Heart left ventricle (tissue), 16 donors: ENCODE measurements at regions of chr16 and their contacts with region 1.

Region 1: GRCh38 chr16:14300705-14301168 is 229.6 kb downstream of the MRTFB start:
- DNase-seq: peak; percentile 66 to 83 (median 76)
- ATAC-seq: peak; percentile 76 to 86 (median 80)
- H3K4me3 ChIP-seq: peak overlapping the region in 11 of 12 donors; percentile 37 to 99 (median 85)
- H3K27ac ChIP-seq: peak overlapping the region in 10 of 12 donors; percentile 49 to 93 (median 82)
- H3K4me1 ChIP-seq: peaks cover 0 to 33% (median 11%) of the 10 kb centered on the region in 12 donors
- H3K27me3 ChIP-seq: peaks cover 0 to 24% (median 0%) of the 10 kb centered on the region in 9 donors
- CTCF ChIP-seq: peak in 11 of 12 donors; percentile 37 to 76 (median 58)
- POLR2A ChIP-seq: no peak

Region 2: DNA sequence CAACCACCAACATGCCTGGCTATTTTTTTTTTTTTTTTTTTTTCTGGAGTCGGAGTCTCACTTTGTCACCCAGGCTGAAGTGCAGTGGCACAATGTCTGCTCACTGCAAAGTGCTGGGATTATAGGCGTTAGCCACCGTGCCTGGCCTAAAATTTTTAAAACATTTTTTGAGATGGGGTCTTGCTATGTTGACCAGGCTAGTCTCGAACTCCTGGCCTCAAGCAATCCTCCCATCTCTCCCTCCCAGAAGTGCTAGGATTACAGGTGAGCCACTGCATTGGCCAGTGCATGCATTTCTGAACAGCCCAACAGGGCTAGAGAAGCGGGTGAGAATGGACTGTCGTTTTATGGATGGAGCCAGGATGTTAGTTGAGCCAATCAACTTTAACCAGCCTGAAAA is 308.4 kb before region 1 on chr16:
- intact Hi-C with region 1: no loop called
- DNase-seq: no peak
- ATAC-seq: no peak
- H3K4me3 ChIP-seq: no peak overlapping the region
- H3K27ac ChIP-seq: peak overlapping the region in 1 of 12 donors; percentile 34
- H3K4me1 ChIP-seq: peaks cover 0 to 18% (median 12%) of the 10 kb centered on the region in 12 donors
- H3K27me3 ChIP-seq: no peaks in the 10 kb centered on the region
- CTCF ChIP-seq: no peak
- POLR2A ChIP-seq: no peak

Region 3: DNA sequence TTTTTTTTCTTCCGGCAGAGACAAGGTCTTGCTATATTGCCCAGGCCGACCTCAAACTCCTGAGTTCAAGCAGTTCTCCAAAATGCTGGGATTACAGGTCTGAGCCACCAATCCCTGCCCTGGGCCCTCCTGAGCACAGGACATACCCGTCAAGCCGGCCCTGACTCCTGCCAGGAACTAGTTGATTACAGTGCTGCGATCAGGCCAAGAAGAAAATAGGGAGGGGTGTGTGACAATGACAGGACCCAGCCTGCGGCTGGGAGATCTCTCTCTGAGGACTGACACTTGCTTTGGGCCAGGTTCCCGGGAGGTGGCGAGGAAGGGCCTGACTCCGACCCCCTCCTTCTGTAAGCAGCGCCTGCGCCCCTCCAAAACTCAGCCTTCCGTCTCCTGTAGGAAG is 47.0 kb after region 1 on chr16:
- intact Hi-C with region 1: loop called in 2 of 10 experiments (anchors 5 to 10 kb)
- DNase-seq: peak; percentile 66 to 87 (median 73)
- ATAC-seq: peak; percentile 96 to 98 (median 96)
- H3K4me3 ChIP-seq: no peak overlapping the region
- H3K27ac ChIP-seq: peak overlapping the region; percentile 4 to 77 (median 62)
- H3K4me1 ChIP-seq: peaks cover 0 to 10% (median 0%) of the 10 kb centered on the region in 12 donors
- H3K27me3 ChIP-seq: no peaks in the 10 kb centered on the region
- CTCF ChIP-seq: no peak
- POLR2A ChIP-seq: no peak

Region 4: DNA sequence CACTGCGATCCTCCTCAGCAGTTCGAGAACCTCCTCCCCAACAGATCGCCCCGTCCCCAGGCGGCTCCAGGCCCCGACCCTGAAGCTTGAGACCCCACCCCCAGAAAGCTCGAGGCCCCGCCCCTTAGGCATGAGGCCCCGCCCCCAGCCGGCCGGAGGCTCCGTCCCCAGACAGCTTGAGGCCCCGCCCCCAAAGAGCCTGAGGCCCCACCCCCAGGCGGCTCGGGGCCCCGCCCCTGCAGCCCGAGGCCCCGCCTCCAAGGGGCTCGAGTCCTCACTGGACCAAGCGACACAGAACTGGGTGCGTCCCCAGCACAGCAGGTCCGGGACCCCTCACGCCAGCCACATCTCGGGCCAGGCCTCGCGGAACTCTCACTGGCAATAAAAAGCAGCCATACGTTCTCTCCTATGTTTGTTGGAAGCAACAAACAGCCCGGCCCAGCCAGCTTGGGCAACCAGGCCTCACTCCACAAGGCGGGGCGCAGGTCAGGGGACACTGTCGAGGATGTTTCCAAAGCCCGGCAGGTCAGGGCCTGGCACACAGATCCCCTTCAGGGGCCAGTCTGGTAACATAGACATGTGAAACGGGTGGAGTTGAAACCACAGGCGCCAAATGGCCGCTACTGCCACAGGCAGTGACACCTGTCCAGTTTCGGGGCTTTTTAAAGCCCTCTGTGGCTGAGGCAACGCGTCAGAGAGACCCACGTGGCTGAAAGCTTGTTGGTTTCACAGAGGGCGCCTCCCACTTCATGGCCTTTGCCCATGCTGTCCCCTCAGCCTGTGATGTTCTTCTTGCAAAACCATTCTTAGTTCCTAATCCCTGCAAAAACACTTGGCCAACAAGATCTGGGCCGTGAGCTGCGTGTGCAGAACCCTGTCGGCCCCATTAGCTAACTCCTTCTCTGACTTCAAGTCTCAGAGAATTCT is 105.1 kb after region 1 on chr16:
- intact Hi-C with region 1: loop called in 2 of 10 experiments (anchors 10 kb)
- DNase-seq: peak in 1 of 5 donors; percentile 3
- ATAC-seq: peak in 1 of 4 donors; percentile 17
- H3K4me3 ChIP-seq: no peak overlapping the region
- H3K27ac ChIP-seq: no peak overlapping the region
- H3K4me1 ChIP-seq: no peaks in the 10 kb centered on the region
- H3K27me3 ChIP-seq: no peaks in the 10 kb centered on the region
- CTCF ChIP-seq: no peak
- POLR2A ChIP-seq: no peak

Region 5: DNA sequence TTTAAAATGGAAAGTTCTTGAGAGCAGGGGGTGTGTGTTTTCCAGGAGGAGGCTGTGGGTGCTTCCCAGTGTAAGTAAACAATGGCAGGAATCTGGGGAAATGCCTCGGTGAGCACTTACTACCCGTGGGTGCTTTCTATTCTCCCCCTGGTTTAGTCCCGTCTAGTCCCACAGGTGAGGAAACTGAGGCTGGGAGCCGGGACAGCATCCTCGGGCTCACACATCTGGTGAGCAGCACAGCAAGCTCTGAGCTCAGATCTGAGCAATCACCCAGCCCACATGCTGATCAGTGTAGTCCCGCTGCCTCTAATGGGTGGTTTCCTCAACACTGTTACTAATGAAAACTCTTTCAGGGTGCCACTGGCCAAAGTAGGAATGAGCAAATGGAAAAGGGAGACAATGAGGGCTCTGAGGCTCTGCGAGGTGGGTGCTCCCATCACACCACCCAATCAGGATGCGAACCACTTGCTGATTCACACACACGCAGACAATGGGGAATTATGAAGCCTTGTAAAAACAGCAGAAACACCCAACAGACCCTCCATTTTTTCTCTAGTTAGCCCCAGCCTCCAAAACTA is 126.7 kb after region 1 on chr16:
- intact Hi-C with region 1: loop called in 1 of 10 experiments (anchors 10 kb)
- DNase-seq: no peak
- ATAC-seq: peak in 1 of 4 donors; percentile 45
- H3K4me3 ChIP-seq: no peak overlapping the region
- H3K27ac ChIP-seq: no peak overlapping the region
- H3K4me1 ChIP-seq: peaks cover 0 to 5% (median 0%) of the 10 kb centered on the region in 12 donors
- H3K27me3 ChIP-seq: no peaks in the 10 kb centered on the region
- CTCF ChIP-seq: no peak
- POLR2A ChIP-seq: no peak

Region 6: DNA sequence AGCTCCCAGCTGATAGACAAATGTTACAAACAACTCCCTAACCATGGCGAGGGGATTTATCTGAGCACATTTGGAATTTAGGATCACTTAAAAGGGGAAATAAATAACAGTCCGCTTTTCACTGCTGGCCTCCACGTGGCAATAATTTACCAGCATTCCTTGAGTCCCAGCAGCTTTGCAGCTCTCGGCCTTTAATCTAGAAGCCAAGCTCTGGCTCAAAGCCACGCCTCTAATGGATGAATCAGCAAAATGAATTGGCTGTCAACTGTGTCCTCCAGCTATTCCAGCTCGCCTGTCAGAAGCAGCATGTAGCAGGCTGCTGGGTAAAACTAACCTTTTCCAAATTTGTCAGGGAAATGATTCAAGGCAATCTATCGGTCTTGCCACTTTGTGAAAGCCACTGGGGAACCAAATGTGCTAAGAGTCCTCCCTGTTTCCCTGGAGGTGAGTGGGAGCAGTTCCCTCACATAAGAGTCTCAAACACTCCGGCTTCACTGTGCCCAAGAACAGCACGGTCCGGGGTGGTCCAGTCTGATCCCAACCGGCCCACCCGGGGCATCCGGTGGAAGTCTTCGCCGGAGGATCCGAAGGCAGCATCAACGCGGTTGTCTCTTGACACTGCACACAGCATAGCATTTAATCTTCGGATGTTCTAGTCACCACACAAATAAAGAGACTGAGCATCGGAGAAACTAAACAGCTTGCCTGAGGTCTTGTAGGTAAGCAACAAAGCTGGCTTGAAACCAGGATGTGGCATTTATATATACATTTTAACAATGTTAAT is 186.0 kb after region 1 on chr16:
- intact Hi-C with region 1: loop called in 2 of 10 experiments (anchors 2 to 5 kb)
- DNase-seq: peak in 4 of 5 donors; percentile 79 to 91 (median 86)
- ATAC-seq: peak; percentile 66 to 86 (median 86)
- H3K4me3 ChIP-seq: peak overlapping the region in 11 of 12 donors; percentile 4 to 55 (median 49)
- H3K27ac ChIP-seq: peak overlapping the region; percentile 43 to 84 (median 80)
- H3K4me1 ChIP-seq: peaks cover 0 to 54% (median 25%) of the 10 kb centered on the region in 12 donors
- H3K27me3 ChIP-seq: no peaks in the 10 kb centered on the region
- CTCF ChIP-seq: peak in 1 of 12 donors; percentile 12
- POLR2A ChIP-seq: peak in 1 of 2 donors; percentile 28

Region 7: DNA sequence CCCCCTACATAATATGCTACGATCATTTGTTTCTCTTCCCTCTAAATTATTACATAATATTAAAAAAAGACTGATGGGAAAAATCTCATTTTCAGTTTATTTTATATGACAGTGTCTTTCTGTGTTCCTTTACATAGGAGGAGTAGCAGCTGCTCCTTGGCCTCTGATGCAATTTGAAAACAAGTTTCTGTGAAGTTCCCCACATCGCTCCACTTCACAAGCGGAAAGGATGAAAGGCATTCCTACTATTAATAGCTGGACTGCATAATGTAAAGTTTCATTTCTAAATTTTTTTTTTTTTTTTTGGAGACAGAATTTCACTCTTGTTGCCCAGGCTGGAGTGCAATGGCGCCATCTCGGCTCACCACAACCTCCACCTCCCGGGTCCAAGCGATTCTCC is 233.8 kb after region 1 on chr16:
- intact Hi-C with region 1: loop called (anchors 1 to 5 kb)
- DNase-seq: no peak
- ATAC-seq: no peak
- H3K4me3 ChIP-seq: no peak overlapping the region
- H3K27ac ChIP-seq: no peak overlapping the region
- H3K4me1 ChIP-seq: peaks cover 0 to under 1% (median 0%) of the 10 kb centered on the region in 12 donors
- H3K27me3 ChIP-seq: no peaks in the 10 kb centered on the region
- CTCF ChIP-seq: no peak
- POLR2A ChIP-seq: no peak